ENCODE measurements at regions of chr2 and their contacts with region 1.

Region 1: GRCh38 chr2:71923887-71924533 is 223.7 kb downstream of the CYP26B1 start:
- DNase-seq: peak; percentile 87
- H3K4me3 Mint-ChIP-seq: no peak overlapping the region
- H3K27ac Mint-ChIP-seq: no peak overlapping the region
- H3K4me1 Mint-ChIP-seq: no peaks in the 10 kb centered on the region
- H3K27me3 Mint-ChIP-seq: no peaks in the 10 kb centered on the region
- CTCF ChIP-seq: peak; percentile 80

Region 2: GRCh38 chr2:71609958-71610357 is 314.1 kb before region 1 on chr2:
- CTCF ChIA-PET with region 1: interaction called, 15 read pairs
- POLR2A ChIA-PET with region 1: interaction called, 4 read pairs
- intact Hi-C with region 1: no loop called
- DNase-seq: peak; percentile 33
- H3K4me3 Mint-ChIP-seq: no peak overlapping the region
- H3K27ac Mint-ChIP-seq: no peak overlapping the region
- H3K4me1 Mint-ChIP-seq: peaks cover 5% of the 10 kb centered on the region
- H3K27me3 Mint-ChIP-seq: peaks cover 47% of the 10 kb centered on the region
- CTCF ChIP-seq: peak; percentile 23

Region 3: GRCh38 chr2:71833855-71834560 is 90.0 kb before region 1 on chr2:
- CTCF ChIA-PET with region 1: no interaction called
- POLR2A ChIA-PET with region 1: no interaction called
- intact Hi-C with region 1: no loop called
- DNase-seq: no peak
- H3K4me3 Mint-ChIP-seq: no peak overlapping the region
- H3K27ac Mint-ChIP-seq: no peak overlapping the region
- H3K4me1 Mint-ChIP-seq: no peaks in the 10 kb centered on the region
- H3K27me3 Mint-ChIP-seq: no peaks in the 10 kb centered on the region
- CTCF ChIP-seq: no peak

Region 4: GRCh38 chr2:71882949-71883472 is 41.0 kb before region 1 on chr2:
- CTCF ChIA-PET with region 1: interaction called, 15 read pairs
- POLR2A ChIA-PET with region 1: no interaction called
- intact Hi-C with region 1: no loop called
- DNase-seq: peak; percentile 97
- H3K4me3 Mint-ChIP-seq: peak overlapping the region; percentile 2
- H3K27ac Mint-ChIP-seq: no peak overlapping the region
- H3K4me1 Mint-ChIP-seq: peaks cover 40% of the 10 kb centered on the region
- H3K27me3 Mint-ChIP-seq: peaks cover under 1% of the 10 kb centered on the region
- CTCF ChIP-seq: no peak

Region 5: GRCh38 chr2:71995067-71995665 is 71.2 kb after region 1 on chr2:
- CTCF ChIA-PET with region 1: interaction called, 42 read pairs
- POLR2A ChIA-PET with region 1: no interaction called
- intact Hi-C with region 1: loop called (anchors 1 kb)
- DNase-seq: peak; percentile 69
- H3K4me3 Mint-ChIP-seq: no peak overlapping the region
- H3K27ac Mint-ChIP-seq: no peak overlapping the region
- H3K4me1 Mint-ChIP-seq: no peaks in the 10 kb centered on the region
- H3K27me3 Mint-ChIP-seq: no peaks in the 10 kb centered on the region
- CTCF ChIP-seq: peak; percentile 64

Region 6: GRCh38 chr2:72150157-72150865 is 226.3 kb after region 1 on chr2:
- CTCF ChIA-PET with region 1: interaction called, 204 read pairs
- POLR2A ChIA-PET with region 1: interaction called, 12 read pairs
- intact Hi-C with region 1: loop called (anchors 1 kb)
- DNase-seq: peak; percentile 91
- H3K4me3 Mint-ChIP-seq: peak overlapping the region; percentile 79
- H3K27ac Mint-ChIP-seq: no peak overlapping the region
- H3K4me1 Mint-ChIP-seq: peaks cover 27% of the 10 kb centered on the region
- H3K27me3 Mint-ChIP-seq: peaks cover 41% of the 10 kb centered on the region
- CTCF ChIP-seq: peak; percentile 81

Region 7: DNA sequence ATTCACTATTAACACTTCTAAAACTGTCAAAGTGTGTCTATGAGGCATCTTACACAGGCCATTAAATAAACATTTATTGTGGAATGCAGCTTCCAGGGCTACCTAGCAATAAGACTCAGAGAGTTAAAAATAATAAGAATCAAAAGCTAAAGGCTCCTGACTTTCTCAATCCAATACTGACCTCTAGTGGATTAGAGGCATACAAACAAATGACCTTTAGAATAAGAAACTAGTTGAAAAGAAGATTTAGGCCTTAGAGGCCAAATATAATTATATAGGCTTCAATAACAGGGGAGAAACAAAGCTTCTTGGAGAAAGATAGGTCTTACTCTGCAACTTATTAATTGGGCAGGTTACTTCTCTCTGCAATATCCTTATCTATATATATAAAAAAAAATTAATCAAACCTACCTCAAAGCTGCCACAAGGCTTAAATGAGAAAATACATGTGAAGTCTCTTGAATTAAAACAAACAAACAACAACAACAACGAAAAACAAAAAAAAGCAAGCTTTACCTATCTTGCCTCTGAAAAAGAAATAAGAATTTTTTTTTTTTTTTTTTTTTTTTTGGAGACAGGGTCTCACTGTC is 655.7 kb after region 1 on chr2:
- CTCF ChIA-PET with region 1: interaction called, 7 read pairs
- POLR2A ChIA-PET with region 1: no interaction called
- intact Hi-C with region 1: loop called (anchors 1 kb)
- DNase-seq: peak; percentile 62
- H3K4me3 Mint-ChIP-seq: no peak overlapping the region
- H3K27ac Mint-ChIP-seq: no peak overlapping the region
- H3K4me1 Mint-ChIP-seq: no peaks in the 10 kb centered on the region
- H3K27me3 Mint-ChIP-seq: no peaks in the 10 kb centered on the region
- CTCF ChIP-seq: peak; percentile 65